ENCODE measurements at regions of chr12 and their contacts with region 1.

Region 1: DNA sequence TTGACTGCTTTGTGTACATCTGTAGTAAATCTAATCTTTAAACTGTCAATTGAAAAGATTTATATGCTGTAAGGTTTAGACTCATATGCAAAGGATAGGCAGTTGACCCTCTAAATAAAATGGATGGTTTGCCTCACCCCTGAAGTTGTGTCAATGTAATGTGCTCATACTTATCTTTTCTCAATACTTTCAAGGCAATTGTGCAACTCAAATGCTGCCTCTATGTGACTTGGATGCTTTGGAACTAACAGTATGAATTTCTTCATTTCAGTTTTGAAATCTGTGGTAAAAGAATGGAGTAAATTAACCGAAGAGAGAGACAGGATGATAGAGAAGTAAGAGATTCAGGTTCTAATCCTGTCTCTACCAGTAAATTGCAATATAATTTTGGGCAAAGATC is 9.7 kb downstream of the PDE6H start:
- DNase-seq: no peak
- H3K4me3 ChIP-seq: peak overlapping the region in 1 of 8 donors; percentile 25
- H3K27ac ChIP-seq: peak overlapping the region in 7 of 8 donors; percentile 24 to 85 (median 78)
- H3K4me1 ChIP-seq: peaks cover 0 to 78% (median 32%) of the 10 kb centered on the region in 6 donors
- H3K27me3 ChIP-seq: no peaks in the 10 kb centered on the region
- CTCF ChIP-seq: no peak
- POLR2A ChIP-seq: no peak

Region 2: GRCh38 chr12:14928969-14929368 is 53.6 kb before region 1 on chr12:
- intact Hi-C with region 1: no loop called
- DNase-seq: no peak
- H3K4me3 ChIP-seq: no peak overlapping the region
- H3K27ac ChIP-seq: no peak overlapping the region
- H3K4me1 ChIP-seq: peaks cover 0 to under 1% (median 0%) of the 10 kb centered on the region in 6 donors
- H3K27me3 ChIP-seq: no peaks in the 10 kb centered on the region
- CTCF ChIP-seq: no peak
- POLR2A ChIP-seq: no peak

Region 3: GRCh38 chr12:14960548-14961465 is 21.8 kb before region 1 on chr12:
- intact Hi-C with region 1: loop called (anchors 2 kb)
- DNase-seq: peak; percentile 81
- H3K4me3 ChIP-seq: peak overlapping the region; percentile 59 to 94 (median 74)
- H3K27ac ChIP-seq: peak overlapping the region; percentile 86 to 94 (median 91)
- H3K4me1 ChIP-seq: peaks cover 35 to 85% (median 69%) of the 10 kb centered on the region in 6 donors
- H3K27me3 ChIP-seq: no peaks in the 10 kb centered on the region
- CTCF ChIP-seq: no peak
- POLR2A ChIP-seq: no peak